Activated CD4-positive, alpha-beta T cell treated with anti-CD3 and anti-CD28 coated beads for 36 hours (primary cell): ENCODE measurements at regions of chr12 and their contacts with region 1.

Region 1: DNA sequence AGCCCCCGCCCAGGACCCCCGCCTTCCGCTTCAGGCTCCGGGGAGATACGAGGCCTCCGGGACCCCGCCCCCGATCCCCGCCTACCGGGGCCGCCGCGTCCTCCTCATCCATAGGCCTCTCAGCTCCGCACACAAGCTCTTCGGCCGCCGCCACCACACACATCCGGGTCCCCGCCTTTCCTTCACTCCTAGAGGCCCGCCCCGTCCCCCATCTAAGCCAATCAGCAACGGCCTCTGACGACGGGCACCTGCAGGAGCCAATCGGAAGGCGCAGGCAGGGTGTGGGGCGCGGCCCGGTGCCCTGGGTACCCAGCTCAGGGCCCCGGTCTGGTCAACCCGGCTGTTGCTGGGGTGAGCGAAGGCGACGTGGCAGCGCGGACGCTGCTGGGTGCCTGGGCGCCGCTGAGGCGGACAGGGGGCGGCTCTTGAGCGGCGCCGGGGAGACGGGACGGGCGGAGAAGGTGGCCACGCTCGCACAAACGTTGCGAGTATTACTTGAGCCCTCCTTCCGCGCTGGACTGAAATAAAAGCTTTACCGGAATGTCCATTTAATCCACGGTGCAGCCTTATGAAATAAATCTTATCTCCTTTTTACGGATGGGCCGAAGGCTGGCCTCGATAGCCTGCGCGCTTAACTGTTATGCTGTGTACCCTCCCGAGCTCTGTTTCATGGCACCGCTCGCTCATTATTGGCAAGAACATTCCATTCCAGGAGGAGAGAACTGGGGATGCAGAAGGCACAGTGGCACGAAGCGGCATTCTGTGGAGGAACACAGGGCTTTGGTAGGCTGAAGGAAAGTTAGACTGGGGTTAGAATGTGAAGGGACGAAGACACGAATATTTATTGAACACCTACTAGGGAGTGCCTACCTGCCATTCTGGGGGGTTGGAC is at the start of gene SPRYD3:
- DNase-seq: peak; percentile 98
- ATAC-seq: peak; percentile 98
- H3K4me3 Mint-ChIP-seq: peak within 1 kb of the TSS; percentile 80
- H3K27ac Mint-ChIP-seq: peak within 1 kb of the TSS; percentile 74
- H3K4me1 Mint-ChIP-seq: peaks cover 33% of the 10 kb centered on the region
- H3K27me3 Mint-ChIP-seq: no peaks in the 10 kb centered on the region
- total RNA-seq, gene SPRYD3: 13.7 to 18.2 TPM

Region 2: GRCh38 chr12:52634266-52635056 is 445.0 kb before region 1 on chr12:
- CTCF ChIA-PET with region 1: no interaction called
- POLR2A ChIA-PET with region 1: no interaction called
- intact Hi-C with region 1: no loop called
- DNase-seq: no peak
- ATAC-seq: no peak
- H3K4me3 Mint-ChIP-seq: no peak overlapping the region
- H3K27ac Mint-ChIP-seq: no peak overlapping the region
- H3K4me1 Mint-ChIP-seq: peaks cover 52% of the 10 kb centered on the region
- H3K27me3 Mint-ChIP-seq: no peaks in the 10 kb centered on the region

Region 3: GRCh38 chr12:52969828-52970569 is 109.5 kb before region 1 on chr12:
- CTCF ChIA-PET with region 1: no interaction called
- POLR2A ChIA-PET with region 1: no interaction called
- intact Hi-C with region 1: no loop called
- DNase-seq: no peak
- ATAC-seq: no peak
- H3K4me3 Mint-ChIP-seq: no peak overlapping the region
- H3K27ac Mint-ChIP-seq: no peak overlapping the region
- H3K4me1 Mint-ChIP-seq: no peaks in the 10 kb centered on the region
- H3K27me3 Mint-ChIP-seq: peaks cover 7% of the 10 kb centered on the region

Region 4: DNA sequence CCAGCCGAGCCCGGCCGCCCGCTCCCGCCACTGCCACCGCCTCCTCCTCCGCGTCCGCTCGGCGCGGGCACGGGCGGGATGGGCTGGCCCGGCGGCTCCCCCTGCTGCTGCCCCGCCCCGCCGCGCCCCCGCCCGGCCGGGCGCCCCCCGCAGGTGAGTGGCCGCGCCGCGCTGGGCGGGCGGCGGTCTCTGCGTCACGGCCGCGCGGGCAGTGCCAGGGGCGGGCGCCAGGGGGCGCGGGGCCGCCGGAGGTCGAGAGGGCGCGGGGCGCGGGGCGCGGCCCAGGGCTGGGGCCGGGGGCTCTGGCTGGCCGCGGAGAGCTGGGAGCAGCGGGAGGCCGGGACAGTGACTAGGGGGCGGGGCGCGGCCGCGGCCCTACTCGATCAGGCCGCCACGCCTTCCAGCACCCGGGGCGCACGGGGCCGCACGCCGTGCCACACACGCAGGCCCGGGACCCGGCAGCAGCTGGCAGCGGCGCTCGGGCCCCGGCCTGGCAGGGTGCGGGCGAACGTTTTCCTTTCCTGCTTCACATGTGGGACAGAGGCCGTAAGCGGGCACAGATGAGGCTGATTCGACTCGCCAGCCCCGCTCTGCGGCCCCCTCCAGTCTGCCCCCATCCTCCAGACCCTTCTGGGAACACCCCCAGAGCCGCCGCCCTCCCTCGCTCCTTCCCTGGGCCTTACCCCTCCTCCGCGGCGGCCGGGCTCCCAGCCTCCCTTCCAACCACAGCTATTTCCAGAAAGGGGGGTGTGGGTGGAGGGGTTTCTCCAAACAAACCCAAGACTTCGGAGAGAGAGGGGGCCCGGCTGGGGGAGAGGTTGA is 32.0 kb before region 1 on chr12:
- CTCF ChIA-PET with region 1: interaction called, 6 read pairs
- POLR2A ChIA-PET with region 1: interaction called, 3 read pairs
- intact Hi-C with region 1: loop called in 1 of 2 experiments (anchors 1 kb)
- DNase-seq: peak; percentile 80
- ATAC-seq: peak; percentile 73
- H3K4me3 Mint-ChIP-seq: peak overlapping the region; percentile 86
- H3K27ac Mint-ChIP-seq: peak overlapping the region; percentile 37
- H3K4me1 Mint-ChIP-seq: peaks cover 30% of the 10 kb centered on the region
- H3K27me3 Mint-ChIP-seq: no peaks in the 10 kb centered on the region

Region 5: DNA sequence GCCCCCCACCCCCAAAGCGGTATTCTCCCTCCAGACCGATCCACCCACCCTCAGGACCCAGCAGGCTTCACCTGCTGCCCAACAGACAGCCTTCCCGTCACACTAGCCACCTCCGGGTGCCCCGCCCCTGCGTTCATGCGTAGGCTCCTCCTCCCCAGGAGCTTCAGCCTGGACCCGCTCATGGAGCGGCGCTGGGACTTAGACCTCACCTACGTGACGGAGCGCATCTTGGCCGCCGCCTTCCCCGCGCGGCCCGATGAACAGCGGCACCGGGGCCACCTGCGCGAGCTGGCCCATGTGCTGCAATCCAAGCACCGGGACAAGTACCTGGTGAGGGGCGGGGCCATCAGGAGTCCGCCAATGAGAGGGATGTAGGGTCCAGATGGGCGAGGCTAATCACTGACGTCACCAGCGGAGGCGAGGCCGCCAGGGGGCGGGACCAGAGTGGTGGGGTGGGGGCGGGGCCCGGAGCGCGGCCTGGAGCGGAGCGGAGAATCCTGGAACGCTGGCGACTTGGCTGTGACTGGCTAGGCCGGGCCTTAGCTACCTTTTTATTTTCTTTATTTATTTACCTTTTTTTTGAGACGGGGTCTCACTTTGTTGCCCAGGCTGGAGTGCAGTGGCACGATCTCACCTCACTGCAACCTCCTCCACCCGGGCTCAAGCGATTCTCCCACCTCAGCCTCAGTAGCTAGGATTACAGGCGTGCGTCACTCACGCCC is 25.2 kb before region 1 on chr12:
- CTCF ChIA-PET with region 1: interaction called, 7 read pairs
- POLR2A ChIA-PET with region 1: no interaction called
- intact Hi-C with region 1: loop called (anchors 1 to 2 kb)
- DNase-seq: peak; percentile 96
- ATAC-seq: peak; percentile 94
- H3K4me3 Mint-ChIP-seq: peak overlapping the region; percentile 86
- H3K27ac Mint-ChIP-seq: peak overlapping the region; percentile 84
- H3K4me1 Mint-ChIP-seq: peaks cover 14% of the 10 kb centered on the region
- H3K27me3 Mint-ChIP-seq: no peaks in the 10 kb centered on the region

Region 6: GRCh38 chr12:53098982-53099651 is 19.6 kb after region 1 on chr12:
- CTCF ChIA-PET with region 1: interaction called, 277 read pairs
- POLR2A ChIA-PET with region 1: interaction called, 13 read pairs
- intact Hi-C with region 1: loop called (anchors 1 kb)
- DNase-seq: peak; percentile 95
- ATAC-seq: peak; percentile 59
- H3K4me3 Mint-ChIP-seq: peak overlapping the region; percentile 72
- H3K27ac Mint-ChIP-seq: peak overlapping the region; percentile 89
- H3K4me1 Mint-ChIP-seq: peaks cover 43% of the 10 kb centered on the region
- H3K27me3 Mint-ChIP-seq: peaks cover 12% of the 10 kb centered on the region